ENCODE measurements at regions of chr3 and their contacts with region 1.

Region 1: DNA sequence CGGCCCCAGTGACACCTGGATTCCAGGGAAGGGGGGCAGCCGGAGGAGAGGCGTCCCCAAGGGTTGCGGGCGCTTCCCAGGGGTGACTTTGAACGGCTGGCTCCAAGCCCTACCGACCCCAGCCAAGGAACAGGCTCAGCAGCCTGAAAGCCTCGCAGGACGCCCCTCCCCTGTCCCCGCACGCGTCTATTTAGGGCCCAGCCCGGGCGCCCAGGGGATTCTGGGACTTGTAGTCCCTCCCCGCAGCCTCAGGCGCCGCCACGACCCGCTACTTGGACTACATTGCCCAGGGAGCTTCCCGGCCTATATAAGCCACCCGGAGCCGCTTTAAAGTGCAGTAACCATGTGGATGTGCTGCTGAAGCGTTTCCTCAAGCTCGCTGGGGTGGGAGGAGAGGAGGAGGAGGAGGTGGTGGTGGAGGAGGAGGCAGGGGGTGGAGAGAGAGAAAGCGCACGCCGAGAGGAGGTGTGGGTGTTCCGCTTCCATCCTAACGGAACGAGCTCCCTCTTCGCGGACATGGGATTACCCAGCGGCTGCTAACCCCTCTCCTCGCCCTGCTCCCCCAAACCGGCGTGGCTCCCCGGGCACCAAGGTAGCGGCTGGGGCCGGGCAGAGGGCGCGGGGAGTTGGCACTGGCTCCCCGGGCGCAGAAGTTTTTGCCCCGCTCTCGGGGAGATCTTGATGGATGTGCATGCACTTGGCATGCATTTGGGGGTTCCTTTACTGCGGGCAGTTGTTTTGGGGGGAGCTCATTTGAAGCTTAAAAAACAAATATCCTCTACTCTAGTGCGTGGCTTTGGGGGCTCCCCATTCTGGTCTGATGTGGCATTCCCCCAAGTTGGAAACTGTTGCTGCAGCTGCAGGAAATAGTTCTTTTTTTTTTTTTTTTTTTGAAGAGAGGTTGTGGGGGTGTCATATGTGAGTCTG is at the start of gene ITPR1:
- DNase-seq: peak; percentile 99
- ATAC-seq: peak; percentile 95
- H3K4me3 Mint-ChIP-seq: peak within 1 kb of the TSS; percentile 77
- H3K27ac Mint-ChIP-seq: peak within 1 kb of the TSS; percentile 71
- H3K4me1 Mint-ChIP-seq: peaks cover 32% of the 10 kb centered on the region
- H3K27me3 Mint-ChIP-seq: peaks cover 8% of the 10 kb centered on the region
- total RNA-seq, gene ITPR1: 48.6 to 55.6 TPM

Region 2: GRCh38 chr3:3126477-3127431 is 1366.5 kb before region 1 on chr3 and contains the start of gene TRNT1:
- CTCF ChIA-PET with region 1: no interaction called
- POLR2A ChIA-PET with region 1: no interaction called
- intact Hi-C with region 1: loop called in 1 of 2 experiments (anchors 2 kb)
- DNase-seq: peak; percentile 98
- ATAC-seq: peak; percentile 91
- H3K4me3 Mint-ChIP-seq: peak within 1 kb of the TSS; percentile 99
- H3K27ac Mint-ChIP-seq: peak within 1 kb of the TSS; percentile 99
- H3K4me1 Mint-ChIP-seq: peaks cover 30% of the 10 kb centered on the region
- H3K27me3 Mint-ChIP-seq: no peaks in the 10 kb centered on the region
- total RNA-seq, gene TRNT1: 51.4 to 58.2 TPM

Region 3: GRCh38 chr3:4409415-4409814 is 83.9 kb before region 1 on chr3:
- CTCF ChIA-PET with region 1: interaction called, 3 read pairs
- POLR2A ChIA-PET with region 1: no interaction called
- intact Hi-C with region 1: loop called in 1 of 2 experiments (anchors 1 kb)
- DNase-seq: peak; percentile 43
- ATAC-seq: peak; percentile 67
- H3K4me3 Mint-ChIP-seq: peak overlapping the region; percentile 4
- H3K27ac Mint-ChIP-seq: peak overlapping the region; percentile 87
- H3K4me1 Mint-ChIP-seq: peaks cover 40% of the 10 kb centered on the region
- H3K27me3 Mint-ChIP-seq: no peaks in the 10 kb centered on the region

Region 4: DNA sequence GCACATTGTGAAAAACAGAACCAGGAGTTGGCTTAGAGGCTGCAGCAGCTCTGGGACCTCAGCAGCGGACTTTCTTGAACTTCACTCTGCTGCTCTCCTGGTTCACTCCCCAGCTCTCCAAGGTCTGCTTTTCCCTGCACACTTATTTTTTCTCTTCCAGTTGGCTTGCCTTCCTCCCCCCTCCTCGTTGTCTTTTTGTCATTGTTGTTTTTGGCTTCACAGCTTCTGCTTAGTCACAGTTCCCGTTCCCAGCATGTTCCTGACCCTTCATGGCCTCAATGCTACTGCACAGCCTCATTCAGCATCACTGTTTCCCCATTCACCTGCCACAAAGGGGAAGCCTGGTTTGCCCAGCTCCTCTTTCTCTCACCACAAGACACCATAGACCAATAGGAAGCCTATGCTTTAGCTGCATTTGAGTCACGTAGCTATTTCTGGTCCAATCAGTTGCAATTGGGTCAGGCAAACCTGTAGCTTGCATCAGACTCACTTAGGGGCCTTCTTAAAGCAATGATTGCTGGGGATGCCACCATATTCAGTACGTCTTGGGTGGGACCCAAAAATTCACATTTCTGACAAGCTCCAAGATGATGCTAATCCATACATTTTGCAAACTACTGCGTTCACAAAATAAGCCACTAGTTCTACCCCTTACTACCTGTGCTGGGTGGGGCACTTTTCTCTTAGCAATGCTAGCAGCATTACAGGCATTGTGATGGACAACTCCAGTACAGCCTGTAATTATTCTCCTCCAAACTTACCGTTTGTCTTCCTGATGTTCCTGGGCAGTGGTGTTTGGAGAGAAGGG is 18.4 kb before region 1 on chr3:
- CTCF ChIA-PET with region 1: interaction called, 3 read pairs
- POLR2A ChIA-PET with region 1: interaction called, 14 read pairs
- intact Hi-C with region 1: loop called (anchors 2 kb)
- DNase-seq: peak; percentile 72
- ATAC-seq: peak; percentile 97
- H3K4me3 Mint-ChIP-seq: no peak overlapping the region
- H3K27ac Mint-ChIP-seq: peak overlapping the region; percentile 49
- H3K4me1 Mint-ChIP-seq: peaks cover 14% of the 10 kb centered on the region
- H3K27me3 Mint-ChIP-seq: peaks cover 24% of the 10 kb centered on the region

Region 5: GRCh38 chr3:4584456-4585249 is 91.4 kb after region 1 on chr3:
- CTCF ChIA-PET with region 1: no interaction called
- POLR2A ChIA-PET with region 1: interaction called, 6 read pairs
- intact Hi-C with region 1: loop called in 1 of 2 experiments (anchors 1 kb)
- DNase-seq: peak; percentile 46
- ATAC-seq: peak; percentile 75
- H3K4me3 Mint-ChIP-seq: peak overlapping the region; percentile 74
- H3K27ac Mint-ChIP-seq: peak overlapping the region; percentile 87
- H3K4me1 Mint-ChIP-seq: peaks cover 76% of the 10 kb centered on the region
- H3K27me3 Mint-ChIP-seq: no peaks in the 10 kb centered on the region

Region 6: DNA sequence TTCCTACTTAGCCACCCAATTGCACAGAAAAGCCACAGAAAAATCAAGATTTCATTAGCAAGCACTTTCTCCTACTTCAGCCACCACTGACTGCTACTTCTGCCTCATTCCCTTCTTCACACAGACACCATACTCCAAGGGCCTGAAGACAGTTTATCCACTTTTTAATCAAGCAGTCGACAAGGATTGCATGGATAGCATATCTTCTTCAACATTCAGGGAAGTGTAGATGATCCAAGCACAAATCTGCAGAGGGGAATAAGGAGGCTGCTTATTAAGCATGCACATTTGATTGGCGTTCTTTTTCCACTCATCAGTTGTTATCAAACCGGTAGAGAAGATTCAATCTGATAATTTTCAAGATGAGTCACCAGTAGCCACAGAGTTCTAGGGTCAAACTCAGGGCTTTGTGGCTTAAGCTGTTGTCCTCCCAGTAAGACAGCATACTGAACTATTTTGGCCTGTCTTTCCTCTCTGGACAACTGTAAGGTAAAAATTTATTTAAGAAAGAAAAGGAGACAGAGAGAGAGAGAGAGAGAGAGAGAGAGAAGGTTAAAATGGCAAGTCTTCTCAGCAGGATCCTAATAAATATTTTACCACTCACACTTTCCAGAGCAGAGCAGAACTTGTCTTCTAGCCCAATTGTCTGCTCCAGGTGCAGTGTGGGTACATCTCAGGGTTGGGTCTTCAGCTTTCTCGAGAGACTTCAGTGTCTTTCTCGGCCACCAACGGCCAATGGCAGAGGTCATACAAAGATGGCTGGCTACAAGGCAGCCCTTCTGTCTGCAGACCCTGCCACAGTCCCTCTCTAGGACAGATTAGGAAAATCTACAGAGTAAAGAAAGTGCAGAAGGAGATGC is 405.4 kb after region 1 on chr3:
- CTCF ChIA-PET with region 1: no interaction called
- POLR2A ChIA-PET with region 1: interaction called, 11 read pairs
- intact Hi-C with region 1: no loop called
- DNase-seq: no peak
- ATAC-seq: peak; percentile 80
- H3K4me3 Mint-ChIP-seq: peak overlapping the region; percentile 15
- H3K27ac Mint-ChIP-seq: peak overlapping the region; percentile 34
- H3K4me1 Mint-ChIP-seq: peaks cover 47% of the 10 kb centered on the region
- H3K27me3 Mint-ChIP-seq: no peaks in the 10 kb centered on the region

Region 7: DNA sequence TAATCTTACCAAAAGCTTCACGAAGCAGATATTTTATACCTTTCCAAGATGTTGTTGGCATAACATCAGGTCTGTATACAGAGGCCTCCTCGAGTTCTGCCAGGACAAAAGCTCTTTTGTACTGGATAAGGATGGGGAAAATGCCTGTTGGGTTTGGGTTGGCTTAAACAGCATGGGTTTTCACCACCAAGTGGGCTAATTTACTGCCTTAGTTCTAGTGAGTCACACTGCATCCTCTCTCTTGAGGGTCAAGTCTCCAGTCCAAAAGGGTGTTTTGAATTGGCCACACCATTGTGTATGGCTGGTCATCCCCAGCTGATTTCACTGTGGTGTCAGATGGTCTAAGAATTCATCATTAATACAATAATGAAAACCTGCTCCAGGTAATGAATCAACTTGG is 459.8 kb after region 1 on chr3:
- CTCF ChIA-PET with region 1: no interaction called
- POLR2A ChIA-PET with region 1: no interaction called
- intact Hi-C with region 1: no loop called
- DNase-seq: no peak
- ATAC-seq: no peak
- H3K4me3 Mint-ChIP-seq: no peak overlapping the region
- H3K27ac Mint-ChIP-seq: no peak overlapping the region
- H3K4me1 Mint-ChIP-seq: no peaks in the 10 kb centered on the region
- H3K27me3 Mint-ChIP-seq: no peaks in the 10 kb centered on the region

Region 8: DNA sequence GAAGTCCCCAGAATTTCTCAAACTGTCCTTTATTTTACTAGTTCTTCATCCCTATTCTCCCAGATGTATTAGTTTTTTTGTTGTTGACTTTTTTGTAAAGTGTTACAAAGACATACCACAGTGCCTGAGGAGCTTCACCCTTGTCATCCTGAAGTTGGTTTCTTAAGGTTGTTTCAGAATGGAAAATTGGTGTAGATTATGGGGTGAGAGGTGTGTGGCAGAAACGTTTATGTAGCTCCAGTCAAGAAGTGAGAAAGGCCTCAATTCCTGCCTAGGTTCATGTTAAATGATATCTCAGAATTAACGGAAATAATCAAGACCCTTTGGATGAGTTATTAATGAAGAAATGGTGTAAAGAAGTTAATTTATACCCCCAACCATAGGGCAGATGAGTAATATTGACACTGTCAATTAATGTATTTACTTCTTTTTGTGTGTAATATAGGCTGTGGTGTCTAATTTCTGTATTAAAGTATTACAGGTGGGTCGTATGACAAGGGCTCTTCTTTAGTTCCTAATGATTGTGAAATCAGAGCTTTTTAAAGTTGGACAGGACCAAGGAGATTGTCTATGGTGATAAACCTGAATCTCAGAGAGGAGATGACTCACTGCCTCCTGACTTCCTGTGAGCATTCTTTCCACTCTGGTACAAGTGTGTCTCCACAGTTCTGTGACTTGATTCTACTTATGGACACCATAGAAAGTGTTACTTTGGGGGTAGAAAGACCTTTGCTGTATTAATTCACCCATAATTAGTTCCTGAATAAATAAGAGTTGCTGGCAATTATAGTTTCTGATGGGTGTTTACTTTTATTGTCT is 701.3 kb after region 1 on chr3:
- CTCF ChIA-PET with region 1: no interaction called
- POLR2A ChIA-PET with region 1: interaction called, 4 read pairs
- intact Hi-C with region 1: loop called (anchors 5 to 10 kb)
- DNase-seq: peak; percentile 62
- ATAC-seq: peak; percentile 34
- H3K4me3 Mint-ChIP-seq: peak overlapping the region; percentile 68
- H3K27ac Mint-ChIP-seq: peak overlapping the region; percentile 98
- H3K4me1 Mint-ChIP-seq: peaks cover 86% of the 10 kb centered on the region
- H3K27me3 Mint-ChIP-seq: no peaks in the 10 kb centered on the region

Measured in activated CD4-positive, alpha-beta T cell treated with anti-CD3 and anti-CD28 coated beads for 36 hours (primary cell).